CD8-positive, alpha-beta T cell (primary cell): ENCODE measurements at regions of chr12 and their contacts with region 1.

Region 1: GRCh38 chr12:21340403-21340802 is 5.7 kb upstream of the SLCO1A2 start:
- DNase-seq: peak in 1 of 9 experiments; percentile 5
- ATAC-seq: no peak
- H3K4me3 ChIP-seq: no peak overlapping the region
- H3K4me3 Mint-ChIP-seq: no peak overlapping the region
- H3K27ac ChIP-seq: no peak overlapping the region
- H3K27ac Mint-ChIP-seq: no peak overlapping the region
- H3K4me1 ChIP-seq: no peaks in the 10 kb centered on the region
- H3K4me1 Mint-ChIP-seq: no peaks in the 10 kb centered on the region
- H3K27me3 ChIP-seq: no peaks in the 10 kb centered on the region
- H3K27me3 Mint-ChIP-seq: no peaks in the 10 kb centered on the region
- CTCF ChIP-seq: no peak

Region 2: DNA sequence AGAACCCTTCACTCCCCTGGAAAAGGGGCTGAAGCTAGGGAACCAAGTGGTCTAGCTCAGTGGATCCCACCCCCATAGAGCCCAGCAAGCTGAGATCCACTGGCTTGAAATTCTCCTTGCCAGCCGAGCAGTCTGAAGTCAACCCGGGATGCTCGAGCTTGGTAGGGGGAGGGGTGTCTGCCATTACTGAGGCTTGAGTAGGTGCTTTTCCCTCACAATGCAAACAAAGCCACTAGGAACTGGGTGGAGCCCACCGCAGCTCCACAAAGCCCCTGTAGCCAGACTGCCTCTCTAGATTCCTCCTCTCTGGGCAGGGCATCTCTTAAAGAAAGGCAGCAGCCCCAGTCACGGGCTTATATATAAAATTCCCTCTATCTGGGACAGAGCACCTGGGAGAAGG is 190.6 kb before region 1 on chr12:
- CTCF ChIA-PET with region 1: no interaction called
- POLR2A ChIA-PET with region 1: no interaction called
- intact Hi-C with region 1: no loop called
- DNase-seq: no peak
- ATAC-seq: no peak
- H3K4me3 ChIP-seq: no peak overlapping the region
- H3K4me3 Mint-ChIP-seq: no peak overlapping the region
- H3K27ac ChIP-seq: no peak overlapping the region
- H3K27ac Mint-ChIP-seq: no peak overlapping the region
- H3K4me1 ChIP-seq: no peaks in the 10 kb centered on the region
- H3K4me1 Mint-ChIP-seq: no peaks in the 10 kb centered on the region
- H3K27me3 ChIP-seq: no peaks in the 10 kb centered on the region
- H3K27me3 Mint-ChIP-seq: no peaks in the 10 kb centered on the region
- CTCF ChIP-seq: no peak

Region 3: GRCh38 chr12:21571046-21571445 is 230.6 kb after region 1 on chr12:
- CTCF ChIA-PET with region 1: no interaction called
- POLR2A ChIA-PET with region 1: no interaction called
- intact Hi-C with region 1: loop called in 1 of 2 experiments (anchors 10 kb)
- DNase-seq: no peak
- ATAC-seq: no peak
- H3K4me3 ChIP-seq: no peak overlapping the region
- H3K4me3 Mint-ChIP-seq: no peak overlapping the region
- H3K27ac ChIP-seq: no peak overlapping the region
- H3K27ac Mint-ChIP-seq: no peak overlapping the region
- H3K4me1 ChIP-seq: no peaks in the 10 kb centered on the region
- H3K4me1 Mint-ChIP-seq: no peaks in the 10 kb centered on the region
- H3K27me3 ChIP-seq: no peaks in the 10 kb centered on the region
- H3K27me3 Mint-ChIP-seq: no peaks in the 10 kb centered on the region
- CTCF ChIP-seq: no peak

Region 4: DNA sequence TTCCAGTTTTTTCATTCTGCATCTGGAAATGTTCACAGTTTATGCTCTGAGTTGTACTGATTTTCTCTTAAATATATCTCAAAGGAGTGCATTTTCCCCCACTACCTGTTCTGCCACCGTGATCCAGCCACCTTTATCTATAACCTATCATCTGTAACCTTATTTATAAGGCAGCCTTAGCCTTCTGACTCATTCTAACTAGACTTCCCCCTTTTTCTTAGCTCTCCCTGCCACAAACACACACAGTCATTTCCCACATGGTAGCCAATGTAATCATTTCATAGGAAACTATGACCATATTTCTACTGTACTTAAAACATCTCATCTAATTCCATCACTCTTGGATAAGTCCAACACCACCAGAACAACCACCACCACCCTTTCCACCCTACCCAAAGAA is 275.0 kb after region 1 on chr12:
- CTCF ChIA-PET with region 1: no interaction called
- POLR2A ChIA-PET with region 1: no interaction called
- intact Hi-C with region 1: no loop called
- DNase-seq: peak in 3 of 9 experiments; percentile 5 to 26 (median 5)
- ATAC-seq: peak; percentile 67
- H3K4me3 ChIP-seq: no peak overlapping the region
- H3K4me3 Mint-ChIP-seq: peak overlapping the region; percentile 29
- H3K27ac ChIP-seq: peak overlapping the region; percentile 29 to 68
- H3K27ac Mint-ChIP-seq: peak overlapping the region; percentile 92
- H3K4me1 ChIP-seq: peaks cover 54% of the 10 kb centered on the region
- H3K4me1 Mint-ChIP-seq: peaks cover 65% of the 10 kb centered on the region
- H3K27me3 ChIP-seq: no peaks in the 10 kb centered on the region
- H3K27me3 Mint-ChIP-seq: no peaks in the 10 kb centered on the region
- CTCF ChIP-seq: no peak